Right cardiac atrium (tissue), 5 donors: ENCODE measurements at regions of chr15 and their contacts with region 1.

Region 1: GRCh38 chr15:26382444-26383075 is 390.3 kb downstream of the GABRB3 start:
- DNase-seq: no peak
- ATAC-seq: no peak
- H3K4me3 ChIP-seq: no peak overlapping the region
- H3K27ac ChIP-seq: no peak overlapping the region
- H3K4me1 ChIP-seq: no peaks in the 10 kb centered on the region
- H3K27me3 ChIP-seq: no peaks in the 10 kb centered on the region

Region 2: GRCh38 chr15:26280283-26280682 is 102.3 kb before region 1 on chr15:
- intact Hi-C with region 1: loop called in 1 of 4 experiments (anchors 10 kb)
- DNase-seq: no peak
- ATAC-seq: no peak
- H3K4me3 ChIP-seq: no peak overlapping the region
- H3K27ac ChIP-seq: no peak overlapping the region
- H3K4me1 ChIP-seq: no peaks in the 10 kb centered on the region
- H3K27me3 ChIP-seq: no peaks in the 10 kb centered on the region

Region 3: DNA sequence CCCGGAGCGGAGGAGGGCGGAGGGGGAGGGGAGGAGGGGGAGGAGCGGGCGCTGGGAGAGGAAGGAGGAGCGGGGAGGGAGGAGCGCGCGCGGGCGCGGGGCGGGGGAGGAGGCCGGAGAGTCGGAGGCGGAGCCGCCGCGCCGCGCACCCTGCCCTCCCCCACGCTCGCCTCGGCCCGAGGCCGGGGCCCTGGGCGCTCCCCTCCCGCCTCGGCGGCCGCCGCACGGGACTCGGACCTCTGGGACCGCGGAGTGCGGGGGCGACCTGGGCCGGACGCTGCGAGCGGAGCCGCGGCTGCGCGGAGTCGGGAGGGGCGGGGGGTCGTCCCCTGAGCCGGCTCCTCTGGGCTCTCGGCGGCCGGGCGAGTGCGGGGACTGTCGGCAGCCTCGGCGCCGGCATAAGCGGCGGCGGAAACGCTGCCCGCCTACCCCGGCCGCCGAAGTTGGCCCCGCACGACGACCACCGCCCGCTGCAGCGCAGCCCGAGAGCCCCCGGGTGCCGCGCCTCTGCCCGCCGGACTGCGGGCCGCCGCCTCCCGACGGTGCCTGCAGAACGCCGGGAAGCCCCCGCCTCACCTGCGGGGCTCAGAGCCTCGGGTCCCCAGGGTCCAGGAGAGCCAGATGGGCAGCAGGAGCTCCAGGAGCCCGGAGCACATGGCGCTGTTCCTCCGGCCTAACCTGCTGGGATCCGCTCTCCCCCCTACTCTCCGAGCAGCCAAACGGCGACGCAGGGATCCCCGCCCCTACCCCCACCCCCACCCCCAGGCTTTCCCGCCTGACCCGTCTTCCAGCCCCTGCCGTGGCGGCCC is 390.7 kb after region 1 on chr15:
- intact Hi-C with region 1: no loop called
- DNase-seq: peak; percentile 75 to 90 (median 90)
- ATAC-seq: peak; percentile 91 to 92
- H3K4me3 ChIP-seq: peak overlapping the region; percentile 83
- H3K27ac ChIP-seq: peak overlapping the region; percentile 67
- H3K4me1 ChIP-seq: no peaks in the 10 kb centered on the region
- H3K27me3 ChIP-seq: peaks cover 3% of the 10 kb centered on the region